KBM-7 (cell line): ENCODE measurements at regions of chr4 and their contacts with region 1.

Region 1: GRCh38 chr4:21765810-21766407 is 182.7 kb downstream of the KCNIP4 start:
- DNase-seq: peak; percentile 54

Region 2: GRCh38 chr4:21512353-21512752 is 253.6 kb before region 1 on chr4:
- in situ Hi-C with region 1: loop called (anchors 25 kb)
- DNase-seq: peak; percentile 39